Sigmoid colon (tissue), 7 donors: ENCODE measurements at regions of chr17 and their contacts with region 1.

Region 1: GRCh38 chr17:2711601-2712299 is at the start of gene CLUH:
- DNase-seq: peak; percentile 98
- H3K4me3 ChIP-seq: peak within 1 kb of the TSS; percentile 70 to 98 (median 88)
- H3K27ac ChIP-seq: peak within 1 kb of the TSS; percentile 81 to 92 (median 85)
- H3K4me1 ChIP-seq: peaks cover 0 to 59% (median 52%) of the 10 kb centered on the region in 4 donors
- H3K27me3 ChIP-seq: no peaks in the 10 kb centered on the region
- CTCF ChIP-seq: no peak
- EP300 ChIP-seq: peak in 1 of 4 donors; percentile 66
- POLR2A ChIP-seq: peak; percentile 39 to 72
- total RNA-seq, gene CLUH: 26.3 to 70.9 (median 39.3) TPM

Region 2: DNA sequence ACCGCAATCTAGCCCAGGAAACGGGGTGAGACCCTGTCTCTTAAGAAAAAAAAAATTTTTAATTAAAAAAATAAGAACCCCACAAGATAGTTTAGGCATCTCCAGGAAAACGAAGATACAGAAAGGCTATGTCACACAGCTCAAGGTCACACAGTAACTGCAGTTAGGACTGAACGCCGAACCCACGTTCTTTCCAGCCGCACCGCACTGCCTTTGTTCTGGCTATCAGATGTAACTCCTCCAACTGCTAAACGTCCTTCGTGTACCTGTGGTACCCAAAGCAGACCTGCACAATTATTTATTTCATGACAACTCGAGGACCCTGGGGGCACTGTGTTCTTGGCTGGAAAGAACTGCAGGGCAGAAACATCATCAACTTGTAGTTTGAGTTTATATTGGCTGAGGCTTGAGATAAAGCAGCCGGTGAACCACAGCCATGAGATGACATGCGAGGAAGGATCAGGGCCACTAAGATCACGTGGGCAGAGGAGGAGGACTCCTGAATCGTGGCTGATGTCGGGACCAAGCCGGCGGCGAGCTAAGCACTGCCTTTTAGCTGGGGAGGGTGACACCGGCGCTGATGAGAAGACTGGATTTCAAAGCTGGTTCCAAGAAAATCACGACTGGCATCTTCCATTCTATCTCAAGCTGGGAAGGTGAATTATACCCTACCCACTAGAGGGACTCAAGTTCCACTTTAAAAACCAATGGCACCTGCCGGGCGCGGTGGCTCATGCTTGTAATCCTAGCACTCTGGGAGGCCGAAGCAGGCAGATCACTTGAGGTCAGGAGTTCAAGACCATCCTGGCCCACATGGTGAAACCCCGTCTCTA is 290.2 kb before region 1 on chr17:
- intact Hi-C with region 1: loop called (anchors 5 kb)
- DNase-seq: no peak
- H3K4me3 ChIP-seq: peak overlapping the region in 1 of 4 donors; percentile 16
- H3K27ac ChIP-seq: peak overlapping the region; percentile 49 to 80 (median 52)
- H3K4me1 ChIP-seq: peaks cover 0 to 44% (median 25%) of the 10 kb centered on the region in 4 donors
- H3K27me3 ChIP-seq: no peaks in the 10 kb centered on the region
- CTCF ChIP-seq: peak in 2 of 4 experiments; percentile 14 to 16
- EP300 ChIP-seq: peak in 1 of 4 donors; percentile 6
- POLR2A ChIP-seq: no peak